Activated naive CD4-positive, alpha-beta T cell treated with anti-CD3 and anti-CD28 coated beads for 36 hours (primary cell): ENCODE measurements at regions of chr3 and their contacts with region 1.

Region 1: GRCh38 chr3:34260271-34261006 is 462.0 kb downstream of the PDCD6IP start:
- DNase-seq: peak; percentile 68
- H3K4me3 Mint-ChIP-seq: no peak overlapping the region
- H3K27ac Mint-ChIP-seq: no peak overlapping the region
- H3K4me1 Mint-ChIP-seq: peaks cover 4% of the 10 kb centered on the region
- H3K27me3 Mint-ChIP-seq: peaks cover 5% of the 10 kb centered on the region

Region 2: GRCh38 chr3:33883538-33883950 is 376.9 kb before region 1 on chr3:
- CTCF ChIA-PET with region 1: interaction called, 8 read pairs
- intact Hi-C with region 1: loop called (anchors 1 kb)
- DNase-seq: no peak
- H3K4me3 Mint-ChIP-seq: peak overlapping the region; percentile 13
- H3K27ac Mint-ChIP-seq: no peak overlapping the region
- H3K4me1 Mint-ChIP-seq: peaks cover 4% of the 10 kb centered on the region
- H3K27me3 Mint-ChIP-seq: peaks cover 4% of the 10 kb centered on the region

Region 3: DNA sequence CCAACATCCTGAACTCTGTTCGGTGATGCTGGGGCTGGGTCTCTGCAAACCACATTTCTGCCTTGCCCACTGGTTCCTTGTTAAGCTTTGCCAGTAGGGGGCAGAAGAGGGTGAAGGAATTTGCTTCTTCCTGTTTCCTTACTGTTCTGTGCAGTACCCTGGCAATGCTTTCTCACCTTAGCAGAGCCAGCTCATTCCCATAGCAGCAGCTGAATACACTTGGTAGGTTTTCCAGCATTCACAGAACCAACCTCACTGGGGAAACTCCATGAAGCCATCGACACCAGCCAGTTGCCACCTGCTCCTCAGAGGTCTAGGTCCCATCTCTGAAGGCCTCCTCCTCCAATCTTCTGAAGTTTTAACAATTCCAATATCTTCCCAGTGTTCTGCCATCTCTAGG is 153.6 kb before region 1 on chr3:
- CTCF ChIA-PET with region 1: interaction called, 3 read pairs
- intact Hi-C with region 1: loop called (anchors 2 kb)
- DNase-seq: peak; percentile 57
- H3K4me3 Mint-ChIP-seq: no peak overlapping the region
- H3K27ac Mint-ChIP-seq: no peak overlapping the region
- H3K4me1 Mint-ChIP-seq: no peaks in the 10 kb centered on the region
- H3K27me3 Mint-ChIP-seq: peaks cover 4% of the 10 kb centered on the region

Region 4: DNA sequence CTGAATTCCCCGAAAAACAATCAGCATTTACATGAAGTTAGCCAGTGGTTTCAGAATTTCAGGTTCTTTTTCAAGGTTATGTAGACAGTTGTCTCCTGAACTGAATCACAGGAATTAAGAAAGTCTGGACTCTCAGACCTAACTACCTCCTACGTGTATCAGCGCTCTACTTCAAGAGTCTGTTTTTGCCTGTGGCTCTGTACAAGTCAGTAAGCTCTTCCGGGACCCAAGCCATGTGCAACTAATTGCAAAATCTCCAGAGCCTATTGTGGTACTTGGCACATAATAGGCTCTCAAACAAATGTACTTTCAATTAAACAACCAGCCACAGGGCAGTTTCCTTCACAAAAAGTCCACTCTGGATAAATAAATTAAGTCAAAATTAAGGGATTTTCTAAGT is 47.8 kb before region 1 on chr3:
- CTCF ChIA-PET with region 1: no interaction called
- intact Hi-C with region 1: no loop called
- DNase-seq: no peak
- H3K4me3 Mint-ChIP-seq: no peak overlapping the region
- H3K27ac Mint-ChIP-seq: no peak overlapping the region
- H3K4me1 Mint-ChIP-seq: no peaks in the 10 kb centered on the region
- H3K27me3 Mint-ChIP-seq: no peaks in the 10 kb centered on the region

Region 5: DNA sequence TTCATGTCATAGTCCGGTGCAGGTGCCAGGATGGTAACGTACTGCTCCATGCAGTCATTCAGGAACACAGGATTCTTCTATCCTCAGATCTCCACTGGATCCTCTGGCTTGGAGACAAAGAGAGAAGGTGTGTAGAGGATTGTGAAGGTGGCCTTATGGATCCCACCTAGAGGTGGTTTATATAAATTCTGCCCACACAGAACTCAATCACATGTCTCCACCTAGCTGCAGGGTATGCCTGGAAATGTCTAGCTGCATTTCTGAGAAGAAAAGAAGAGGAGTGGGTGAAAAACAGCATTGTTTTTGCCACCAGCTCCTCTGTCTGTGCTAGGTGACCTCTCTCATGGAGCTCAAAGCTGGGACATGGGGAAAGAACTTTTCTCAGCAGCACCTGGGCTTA is 16.7 kb after region 1 on chr3:
- CTCF ChIA-PET with region 1: interaction called, 5 read pairs
- intact Hi-C with region 1: loop called (anchors 1 kb)
- DNase-seq: no peak
- H3K4me3 Mint-ChIP-seq: no peak overlapping the region
- H3K27ac Mint-ChIP-seq: no peak overlapping the region
- H3K4me1 Mint-ChIP-seq: no peaks in the 10 kb centered on the region
- H3K27me3 Mint-ChIP-seq: no peaks in the 10 kb centered on the region

Region 6: GRCh38 chr3:34312684-34313083 is 52.2 kb after region 1 on chr3:
- CTCF ChIA-PET with region 1: no interaction called
- intact Hi-C with region 1: no loop called
- DNase-seq: no peak
- H3K4me3 Mint-ChIP-seq: no peak overlapping the region
- H3K27ac Mint-ChIP-seq: no peak overlapping the region
- H3K4me1 Mint-ChIP-seq: no peaks in the 10 kb centered on the region
- H3K27me3 Mint-ChIP-seq: peaks cover 3% of the 10 kb centered on the region

Region 7: DNA sequence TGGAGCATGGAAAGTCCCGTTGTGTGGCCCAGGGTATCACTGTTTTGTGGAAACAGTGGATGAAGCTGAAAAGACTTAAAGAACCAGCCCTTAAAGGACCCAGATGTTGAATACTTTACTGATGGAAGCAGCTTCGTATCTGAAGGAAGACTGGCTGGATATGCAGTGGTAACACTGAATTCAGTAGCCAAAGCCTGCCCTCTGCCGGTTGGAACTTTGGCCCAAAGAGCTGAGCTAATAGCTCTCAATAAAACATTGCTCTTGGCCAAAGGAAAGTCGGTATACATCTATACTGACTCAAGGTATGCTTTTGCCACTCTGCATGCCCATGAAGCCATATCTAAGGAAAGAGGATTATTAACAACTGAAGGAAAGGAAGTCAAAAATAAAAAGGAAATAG is 423.4 kb after region 1 on chr3:
- CTCF ChIA-PET with region 1: interaction called, 5 read pairs
- intact Hi-C with region 1: loop called (anchors 1 kb)
- DNase-seq: peak; percentile 67
- H3K4me3 Mint-ChIP-seq: no peak overlapping the region
- H3K27ac Mint-ChIP-seq: no peak overlapping the region
- H3K4me1 Mint-ChIP-seq: no peaks in the 10 kb centered on the region
- H3K27me3 Mint-ChIP-seq: no peaks in the 10 kb centered on the region

Region 8: DNA sequence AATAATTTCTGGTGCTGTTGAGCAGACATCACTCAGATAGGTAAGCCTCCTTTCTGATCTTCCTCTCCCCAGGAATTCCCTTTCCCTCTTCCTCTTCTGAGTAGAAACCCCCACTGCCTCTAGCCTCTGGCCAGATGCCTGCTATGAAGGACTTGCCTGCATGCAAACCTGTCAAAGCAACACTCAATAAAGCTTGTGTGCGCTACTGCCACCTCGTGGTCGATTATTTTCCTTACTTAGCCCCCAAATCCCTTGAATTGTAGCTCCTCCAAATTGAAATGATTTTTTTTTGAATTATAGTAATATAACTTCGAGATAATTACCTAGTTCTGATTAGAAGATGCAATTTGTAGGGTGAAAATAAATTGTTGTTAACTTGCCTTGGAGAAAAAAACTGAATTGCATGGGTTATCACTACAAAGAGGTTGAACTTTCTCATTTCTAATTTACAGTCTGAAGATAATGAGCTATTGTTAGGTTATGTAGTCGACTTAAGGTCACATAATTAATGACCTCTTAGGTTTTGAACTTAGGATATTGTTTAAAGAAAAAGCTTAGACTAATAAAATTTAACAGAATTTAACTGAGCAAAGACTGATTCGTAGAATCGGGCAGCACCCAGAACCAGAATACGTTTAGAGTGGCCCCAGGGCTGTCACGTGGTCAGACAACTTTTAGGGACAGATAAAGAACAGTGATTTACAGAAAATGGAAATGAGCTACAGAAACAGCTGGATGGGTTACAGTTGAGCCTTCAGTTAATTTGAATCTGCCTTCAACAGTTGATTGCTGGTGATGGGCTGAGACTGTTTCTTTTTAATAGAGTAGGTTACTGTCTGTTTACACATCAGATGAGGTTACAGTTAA is 1648.2 kb after region 1 on chr3:
- CTCF ChIA-PET with region 1: no interaction called
- intact Hi-C with region 1: loop called (anchors 5 kb)
- DNase-seq: peak; percentile 72
- H3K4me3 Mint-ChIP-seq: no peak overlapping the region
- H3K27ac Mint-ChIP-seq: no peak overlapping the region
- H3K4me1 Mint-ChIP-seq: no peaks in the 10 kb centered on the region
- H3K27me3 Mint-ChIP-seq: peaks cover 3% of the 10 kb centered on the region